Activated CD8-positive, alpha-beta T cell treated with anti-CD3 and anti-CD28 coated beads for 36 hours (primary cell): ENCODE measurements at regions of chr14 and their contacts with region 1.

Region 1: DNA sequence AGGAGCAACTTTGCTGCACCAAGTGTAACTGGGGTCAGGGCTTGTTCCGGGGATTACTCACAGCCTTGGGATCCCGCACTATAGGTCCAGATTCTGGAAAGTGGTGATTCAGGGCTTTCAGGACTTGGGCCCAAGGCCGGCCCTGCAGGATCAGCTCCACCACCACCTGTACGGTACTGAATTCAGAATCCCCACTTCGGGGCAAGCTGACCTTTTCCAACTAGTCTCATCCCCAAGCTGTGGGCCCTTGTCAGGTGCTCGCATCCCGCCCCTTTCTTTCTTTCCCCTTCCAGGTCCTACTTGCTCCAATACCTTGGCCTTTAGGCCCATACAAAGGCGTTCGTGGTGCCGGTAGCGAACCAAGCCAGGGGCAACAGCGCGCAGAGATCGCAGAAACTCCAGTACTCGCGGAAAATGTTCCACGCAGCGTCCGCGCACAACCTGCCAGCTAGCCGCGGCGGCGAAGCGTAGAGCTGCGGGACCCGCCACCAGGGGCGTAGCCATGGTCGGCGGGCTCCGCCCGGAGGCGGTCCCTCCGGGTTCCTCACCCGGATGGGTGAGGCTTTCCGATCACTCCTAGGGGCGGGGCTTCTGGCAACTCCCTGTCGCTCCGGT is 487 bp downstream of the TINF2 start:
- DNase-seq: peak; percentile 93
- ATAC-seq: peak; percentile 84
- H3K4me3 Mint-ChIP-seq: peak overlapping the region; percentile 96
- H3K27ac Mint-ChIP-seq: peak overlapping the region; percentile 98
- H3K4me1 Mint-ChIP-seq: peaks cover 54% of the 10 kb centered on the region
- H3K27me3 Mint-ChIP-seq: no peaks in the 10 kb centered on the region
- CTCF ChIP-seq: no peak

Region 2: GRCh38 chr14:24135834-24136542 is 105.9 kb before region 1 on chr14 and contains the start of gene PSME1:
- CTCF ChIA-PET with region 1: interaction called, 10 read pairs
- POLR2A ChIA-PET with region 1: no interaction called
- intact Hi-C with region 1: no loop called
- DNase-seq: peak; percentile 96
- ATAC-seq: peak; percentile 97
- H3K4me3 Mint-ChIP-seq: peak within 1 kb of the TSS; percentile 97
- H3K27ac Mint-ChIP-seq: peak within 1 kb of the TSS; percentile 92
- H3K4me1 Mint-ChIP-seq: peaks cover 56% of the 10 kb centered on the region
- H3K27me3 Mint-ChIP-seq: no peaks in the 10 kb centered on the region
- CTCF ChIP-seq: no peak
- total RNA-seq, gene PSME1: 451 to 460 TPM

Region 3: DNA sequence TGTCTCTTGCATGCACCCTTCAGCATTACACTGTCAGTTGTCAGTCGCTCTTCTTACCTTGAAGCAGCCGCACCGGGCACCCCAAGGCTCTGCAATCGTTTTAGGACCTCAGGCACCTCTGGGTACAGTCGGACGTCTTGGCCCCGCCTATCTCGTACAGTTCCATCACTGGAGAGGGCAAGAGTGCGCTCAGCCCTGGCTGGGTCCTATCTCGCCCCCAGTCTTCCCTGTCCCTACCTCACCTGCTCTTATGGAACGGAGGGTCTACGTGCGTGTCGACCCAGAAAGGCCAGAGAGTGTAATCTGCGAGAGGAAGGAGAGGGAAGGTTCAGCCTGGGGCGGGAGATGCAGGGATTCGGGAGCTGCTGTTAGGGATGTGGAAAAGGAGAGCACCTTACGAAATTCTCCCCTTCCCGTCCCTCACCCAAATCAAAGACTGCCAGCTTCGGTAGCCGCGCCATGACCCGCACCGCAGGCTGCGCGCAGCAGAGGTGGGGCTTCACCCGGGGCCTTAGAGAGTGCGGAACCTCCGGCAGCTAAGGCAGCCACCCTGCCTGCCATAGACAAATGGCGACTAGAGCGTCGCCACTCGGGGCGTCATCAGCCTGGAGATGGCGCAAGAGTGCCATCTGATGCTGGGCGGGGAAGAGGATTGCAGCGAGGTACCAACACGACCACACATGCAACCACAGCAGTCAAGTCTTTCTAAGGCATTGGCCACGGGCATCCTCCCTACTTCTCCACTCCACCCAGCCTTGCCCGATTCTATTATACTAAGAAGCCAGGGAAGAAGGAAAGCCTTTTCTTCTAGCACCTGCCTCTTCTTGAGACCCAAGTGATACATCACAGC is 26.2 kb before region 1 on chr14 and contains the start of gene MDP1:
- CTCF ChIA-PET with region 1: interaction called, 21 read pairs
- POLR2A ChIA-PET with region 1: interaction called, 6 read pairs
- intact Hi-C with region 1: no loop called
- DNase-seq: peak; percentile 91
- ATAC-seq: peak; percentile 74
- H3K4me3 Mint-ChIP-seq: peak within 1 kb of the TSS; percentile 97
- H3K27ac Mint-ChIP-seq: peak within 1 kb of the TSS; percentile 98
- H3K4me1 Mint-ChIP-seq: peaks cover 40% of the 10 kb centered on the region
- H3K27me3 Mint-ChIP-seq: no peaks in the 10 kb centered on the region
- CTCF ChIP-seq: peak; percentile 45
- total RNA-seq, gene MDP1: 11.2 to 11.3 TPM

Region 4: DNA sequence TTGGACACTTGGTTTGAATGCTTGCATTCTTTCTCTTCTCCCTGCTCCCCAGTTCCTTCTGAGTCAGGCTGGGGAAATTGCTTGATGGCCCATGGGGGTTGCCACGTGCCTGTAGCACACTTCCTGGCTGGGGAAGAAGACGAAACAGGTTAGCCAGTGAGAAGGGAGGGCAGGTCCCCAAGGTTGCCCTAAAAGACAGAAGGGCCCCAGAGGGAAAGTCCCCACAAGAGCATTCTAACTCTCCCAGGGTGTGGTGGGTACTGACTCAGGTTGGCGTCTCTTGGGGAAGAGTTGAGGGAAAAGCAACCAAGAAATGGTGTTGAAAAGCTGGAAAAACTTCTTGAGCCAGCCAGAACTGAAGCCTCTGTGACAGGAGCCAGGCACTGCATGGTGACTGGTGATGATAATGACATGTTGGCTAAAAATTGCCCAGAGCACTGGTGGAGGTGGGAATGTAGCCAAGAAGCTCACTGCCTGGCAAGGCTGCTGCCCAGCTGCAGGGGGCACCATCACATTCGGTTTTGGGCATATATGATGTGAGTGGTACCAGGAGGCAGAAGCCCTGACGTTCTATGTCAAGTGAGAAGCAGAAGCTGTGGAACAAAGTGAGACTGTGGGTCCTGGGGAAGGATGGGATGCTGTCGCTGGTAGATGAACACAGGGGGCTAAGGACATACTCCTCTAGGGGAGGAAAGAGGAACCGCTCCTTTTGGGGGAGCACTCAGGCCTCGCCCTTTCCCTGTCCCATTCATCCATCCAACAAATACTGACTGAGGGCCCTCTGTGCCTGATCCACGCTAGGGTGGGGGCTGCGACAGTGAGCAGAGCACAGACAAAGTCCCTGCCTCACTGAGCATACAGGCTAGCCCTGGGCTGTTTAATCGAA is 37.6 kb after region 1 on chr14:
- CTCF ChIA-PET with region 1: interaction called, 31 read pairs
- POLR2A ChIA-PET with region 1: interaction called, 14 read pairs
- intact Hi-C with region 1: no loop called
- DNase-seq: peak; percentile 76
- ATAC-seq: peak; percentile 88
- H3K4me3 Mint-ChIP-seq: no peak overlapping the region
- H3K27ac Mint-ChIP-seq: peak overlapping the region; percentile 77
- H3K4me1 Mint-ChIP-seq: peaks cover 44% of the 10 kb centered on the region
- H3K27me3 Mint-ChIP-seq: no peaks in the 10 kb centered on the region
- CTCF ChIP-seq: peak; percentile 53

Region 5: GRCh38 chr14:24299255-24300195 is 57.6 kb after region 1 on chr14 and contains the starts of genes DHRS1 and NOP9:
- CTCF ChIA-PET with region 1: interaction called, 873 read pairs
- POLR2A ChIA-PET with region 1: interaction called, 22 read pairs
- intact Hi-C with region 1: loop called (anchors 1 kb)
- DNase-seq: peak; percentile 94
- ATAC-seq: peak; percentile 76
- H3K4me3 Mint-ChIP-seq: peak within 1 kb of the TSS; percentile 89
- H3K27ac Mint-ChIP-seq: peak within 1 kb of the TSS; percentile 88
- H3K4me1 Mint-ChIP-seq: peaks cover 40% of the 10 kb centered on the region
- H3K27me3 Mint-ChIP-seq: no peaks in the 10 kb centered on the region
- CTCF ChIP-seq: no peak
- total RNA-seq, gene DHRS1: 11.9 to 13.6 TPM
- total RNA-seq, gene NOP9: 33.5 to 33.6 TPM